ENCODE measurements at regions of chr15 and their contacts with region 1.

Region 1: DNA sequence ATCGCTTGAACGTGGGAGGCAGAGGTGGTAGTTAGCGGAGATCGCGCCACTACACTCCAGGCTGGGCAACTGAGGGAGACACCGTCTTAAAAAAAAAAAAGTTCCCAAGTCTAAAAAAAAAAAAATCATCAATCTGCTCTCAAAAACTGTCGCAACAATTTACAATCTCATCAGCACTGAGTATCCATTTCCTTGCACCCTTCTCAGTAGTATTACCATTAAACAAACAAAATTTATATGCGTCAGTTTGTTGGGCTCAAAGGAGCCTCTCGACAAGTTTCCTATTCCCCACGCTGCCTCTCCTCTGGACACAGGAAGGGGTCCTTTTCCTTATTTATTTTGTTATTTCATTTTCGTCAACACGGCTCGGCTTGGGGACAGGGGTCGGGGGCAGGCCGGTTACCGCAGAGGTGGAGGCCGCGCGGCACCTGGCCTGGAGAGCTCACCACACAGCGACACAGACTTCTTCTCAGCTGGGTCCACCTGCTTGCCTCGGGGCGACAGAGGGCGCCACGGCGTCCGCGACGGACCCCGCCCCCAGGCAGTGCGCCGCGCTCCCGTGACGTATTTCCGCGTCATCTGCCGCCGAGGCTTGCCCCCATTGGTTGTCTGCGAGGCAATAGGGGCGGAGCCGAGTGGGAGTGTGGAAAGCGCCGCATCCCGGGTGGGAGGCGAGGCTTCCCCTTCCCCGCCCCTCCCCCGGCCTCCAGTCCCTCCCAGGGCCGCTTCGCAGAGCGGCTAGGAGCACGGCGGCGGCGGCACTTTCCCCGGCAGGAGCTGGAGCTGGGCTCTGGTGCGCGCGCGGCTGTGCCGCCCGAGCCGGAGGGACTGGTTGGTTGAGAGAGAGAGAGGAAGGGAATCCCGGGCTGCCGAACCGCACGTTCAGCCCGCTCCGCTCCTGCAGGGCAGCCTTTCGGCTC is at the start of gene MAP2K1:
- DNase-seq: peak; percentile 89
- H3K4me3 ChIP-seq: peak within 1 kb of the TSS; percentile 77
- H3K27ac ChIP-seq: peak within 1 kb of the TSS; percentile 86
- H3K27me3 ChIP-seq: no peaks in the 10 kb centered on the region
- CTCF ChIP-seq: peak; percentile 67
- polyA plus RNA-seq, gene MAP2K1: 18.4 and 18.8 TPM in 2 replicates

Region 2: DNA sequence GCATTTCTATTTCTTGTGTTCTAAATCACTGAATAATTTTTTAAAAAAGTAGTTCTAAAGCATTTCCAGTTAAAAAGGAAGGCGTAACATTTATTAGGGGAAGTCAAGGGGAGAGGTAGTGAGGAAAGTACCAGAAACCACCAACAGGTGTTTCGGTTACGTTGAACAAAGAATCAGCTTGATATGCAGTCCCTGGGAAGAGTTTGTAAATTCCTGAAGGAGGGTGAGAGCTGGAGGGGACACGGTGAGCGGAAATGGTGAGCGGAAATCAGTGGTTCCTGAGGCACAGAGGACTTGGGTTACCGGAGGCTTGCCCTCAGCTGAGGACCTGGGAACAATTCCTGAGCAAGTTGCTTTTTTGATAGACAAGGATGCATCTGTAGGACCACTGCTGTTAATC is 18.1 kb after region 1 on chr15:
- CTCF ChIA-PET with region 1: interaction called, 31 read pairs
- POLR2A ChIA-PET with region 1: no interaction called
- DNase-seq: no peak
- H3K4me3 ChIP-seq: no peak overlapping the region
- H3K27ac ChIP-seq: no peak overlapping the region
- H3K27me3 ChIP-seq: no peaks in the 10 kb centered on the region
- CTCF ChIP-seq: no peak

Region 3: GRCh38 chr15:66497502-66498455 is 111.3 kb after region 1 on chr15 and contains the start of gene SNAPC5:
- CTCF ChIA-PET with region 1: interaction called, 44 read pairs
- POLR2A ChIA-PET with region 1: interaction called, 20 read pairs
- DNase-seq: peak; percentile 82
- H3K4me3 ChIP-seq: peak within 1 kb of the TSS; percentile 97
- H3K27ac ChIP-seq: peak within 1 kb of the TSS; percentile 63
- H3K27me3 ChIP-seq: no peaks in the 10 kb centered on the region
- CTCF ChIP-seq: peak; percentile 97
- polyA plus RNA-seq, gene SNAPC5: 26.5 and 31.3 TPM in 2 replicates